PC-3 (cell line): ENCODE measurements at regions of chr3 and their contacts with region 1.

Region 1: DNA sequence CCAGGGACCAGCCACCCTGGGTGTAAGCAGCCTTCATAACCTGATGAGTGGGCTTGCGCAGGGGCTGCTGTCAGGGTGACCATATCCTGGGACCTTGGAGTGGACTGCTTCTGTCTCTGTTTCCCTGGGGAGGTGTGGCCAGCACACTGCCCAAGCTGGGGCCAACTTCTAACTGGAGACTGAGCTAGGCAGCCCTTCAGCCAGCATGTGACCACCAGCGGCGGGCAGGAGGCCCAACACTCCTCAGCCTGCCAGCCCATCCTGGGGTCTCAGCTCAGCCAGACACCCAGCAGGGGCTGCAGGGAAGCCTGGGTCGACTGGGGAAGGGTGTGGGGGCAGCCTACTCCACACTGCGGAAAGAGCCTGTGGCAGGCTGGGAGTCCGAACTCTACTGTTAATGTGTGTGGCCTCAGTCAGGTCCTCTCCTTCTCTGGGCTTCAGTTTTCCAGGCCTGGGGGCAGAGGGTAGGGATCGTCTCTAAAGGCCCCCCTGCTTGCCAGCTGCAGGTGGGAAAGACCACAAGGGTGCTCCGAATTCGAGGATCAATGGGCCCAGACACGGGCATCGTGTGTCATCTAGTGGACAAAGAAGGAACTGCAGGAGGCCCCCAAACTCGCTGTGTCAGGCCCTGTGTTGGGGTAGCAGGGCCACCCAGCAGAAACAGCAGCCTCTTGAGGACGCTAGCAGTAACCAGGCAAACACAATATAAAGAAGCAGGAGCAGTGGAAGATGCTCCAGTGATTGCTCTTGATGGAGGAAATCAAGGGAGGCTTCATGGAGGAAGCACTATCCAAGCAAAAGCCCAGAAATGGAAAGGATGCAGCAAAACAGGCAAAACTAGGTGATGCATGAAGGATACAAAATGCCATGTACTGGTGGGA is 2.0 kb upstream of the SEMA3G start:
- DNase-seq: peak; percentile 80
- ATAC-seq: peak; percentile 44
- H3K4me3 ChIP-seq: no peak overlapping the region
- H3K27ac ChIP-seq: no peak overlapping the region
- H3K4me1 ChIP-seq: peaks cover 6% of the 10 kb centered on the region
- H3K27me3 ChIP-seq: no peaks in the 10 kb centered on the region
- CTCF ChIP-seq: peak; percentile 98

Region 2: DNA sequence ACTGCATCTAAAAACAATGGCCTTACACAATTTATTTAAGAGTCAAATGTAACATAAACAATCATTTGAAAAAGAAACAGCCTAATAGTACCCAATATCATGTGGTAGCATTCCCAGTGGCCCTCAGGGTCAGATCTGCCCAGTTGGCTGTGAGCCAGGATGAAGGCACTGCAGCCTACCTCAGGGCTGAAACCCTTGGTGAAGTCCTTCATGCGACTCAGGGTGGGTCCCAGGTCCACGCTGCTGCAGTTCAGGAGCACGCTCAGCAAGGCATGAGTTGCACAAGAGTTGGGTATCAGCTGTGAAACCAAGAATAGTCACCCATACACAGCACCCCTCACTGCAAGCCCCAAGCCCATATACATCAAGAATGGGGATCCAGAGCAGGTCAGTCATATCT is 39.1 kb before region 1 on chr3:
- CTCF ChIA-PET with region 1: interaction called, 7 read pairs
- POLR2A ChIA-PET with region 1: no interaction called
- intact Hi-C with region 1: loop called (anchors 1 kb)
- DNase-seq: no peak
- ATAC-seq: no peak
- H3K4me3 ChIP-seq: no peak overlapping the region
- H3K27ac ChIP-seq: no peak overlapping the region
- H3K4me1 ChIP-seq: peaks cover 26% of the 10 kb centered on the region
- H3K27me3 ChIP-seq: no peaks in the 10 kb centered on the region
- CTCF ChIP-seq: no peak

Region 3: GRCh38 chr3:52428151-52429005 is 18.5 kb before region 1 on chr3:
- CTCF ChIA-PET with region 1: interaction called, 8 read pairs
- POLR2A ChIA-PET with region 1: no interaction called
- intact Hi-C with region 1: loop called (anchors 1 kb)
- DNase-seq: peak; percentile 82
- ATAC-seq: peak; percentile 99
- H3K4me3 ChIP-seq: no peak overlapping the region
- H3K27ac ChIP-seq: no peak overlapping the region
- H3K4me1 ChIP-seq: no peaks in the 10 kb centered on the region
- H3K27me3 ChIP-seq: no peaks in the 10 kb centered on the region
- CTCF ChIP-seq: peak; percentile 91